AG04449 (cell line): ENCODE measurements at regions of chr19 and their contacts with region 1.

Region 1: GRCh38 chr19:46283771-46284170 is 13.1 kb upstream of the HIF3A start:
- DNase-seq: no peak
- H3K4me3 ChIP-seq: no peak overlapping the region
- CTCF ChIP-seq: no peak

Region 2: DNA sequence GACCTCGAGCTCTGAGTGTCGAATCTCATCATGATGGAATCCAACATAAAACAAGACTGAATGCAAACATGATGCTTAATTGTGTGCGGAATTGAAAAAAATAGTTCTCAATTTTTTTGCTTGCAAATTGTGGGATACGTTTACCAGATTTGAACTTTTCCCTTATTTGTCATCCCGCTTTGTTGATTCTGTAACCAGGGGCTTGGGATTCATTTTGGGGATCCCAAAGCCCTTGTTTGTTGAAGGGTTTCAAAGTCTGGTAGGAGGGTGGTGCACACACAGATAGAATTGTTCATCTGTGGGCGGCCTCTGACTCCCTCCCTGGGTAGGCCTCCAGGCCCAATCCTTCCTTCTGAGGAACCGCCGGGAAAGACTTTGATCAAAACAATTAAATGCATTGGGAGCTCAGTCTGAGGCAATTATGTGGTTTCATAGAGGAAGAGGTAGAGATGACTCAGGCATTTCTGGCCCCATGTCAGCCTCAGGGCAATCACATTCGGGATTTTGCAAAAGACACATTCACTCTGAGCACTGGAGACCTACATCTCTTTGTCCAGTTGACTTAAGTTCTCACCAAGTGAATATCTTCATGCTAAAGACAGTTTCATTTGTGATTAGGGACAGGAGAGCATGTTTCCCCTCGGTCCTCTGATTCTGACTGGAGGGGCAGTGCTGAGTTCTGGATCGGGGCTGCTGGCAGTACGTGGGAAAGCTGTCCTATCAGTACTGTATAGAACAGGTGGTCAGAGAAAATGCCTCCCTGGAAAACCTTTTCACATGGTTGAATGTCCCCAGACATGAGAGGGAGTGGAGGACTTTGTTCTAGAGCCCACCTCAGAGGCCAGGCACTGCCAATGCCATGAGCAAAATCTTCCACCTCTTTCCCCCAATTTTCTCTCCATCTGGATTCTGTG is 215.2 kb before region 1 on chr19:
- CTCF ChIA-PET with region 1: no interaction called
- POLR2A ChIA-PET with region 1: no interaction called
- DNase-seq: peak; percentile 52
- H3K4me3 ChIP-seq: no peak overlapping the region
- CTCF ChIP-seq: no peak

Region 3: DNA sequence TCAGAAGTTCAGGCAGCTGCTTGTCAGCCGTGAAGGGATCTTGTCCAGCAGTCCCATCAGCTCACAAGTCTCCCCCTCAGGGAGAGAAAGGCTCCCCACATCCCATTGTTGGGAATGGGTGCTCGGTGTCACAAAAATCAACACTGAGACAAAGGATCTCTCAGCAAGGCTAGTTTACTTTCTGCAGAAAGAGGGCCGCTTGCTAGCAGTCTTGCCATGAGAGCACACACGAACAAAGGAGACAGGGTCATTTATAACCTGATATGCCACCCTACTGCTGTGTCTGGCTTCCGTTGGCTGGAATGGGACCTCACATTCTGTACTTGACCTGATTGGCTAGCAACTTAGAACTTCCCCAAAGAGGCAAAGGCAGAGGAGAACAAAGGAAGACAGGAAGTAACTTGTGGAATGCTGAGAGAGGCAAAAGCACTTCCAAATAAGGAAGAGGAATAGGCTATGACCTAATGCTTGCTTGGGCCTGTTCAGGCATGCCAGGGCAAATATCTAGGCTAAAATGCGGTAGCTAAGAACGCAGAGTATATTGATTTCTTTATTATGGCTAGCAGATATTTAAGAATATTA is 150.6 kb before region 1 on chr19:
- CTCF ChIA-PET with region 1: no interaction called
- POLR2A ChIA-PET with region 1: no interaction called
- DNase-seq: peak; percentile 97
- H3K4me3 ChIP-seq: peak overlapping the region; percentile 19
- CTCF ChIP-seq: no peak

Region 4: DNA sequence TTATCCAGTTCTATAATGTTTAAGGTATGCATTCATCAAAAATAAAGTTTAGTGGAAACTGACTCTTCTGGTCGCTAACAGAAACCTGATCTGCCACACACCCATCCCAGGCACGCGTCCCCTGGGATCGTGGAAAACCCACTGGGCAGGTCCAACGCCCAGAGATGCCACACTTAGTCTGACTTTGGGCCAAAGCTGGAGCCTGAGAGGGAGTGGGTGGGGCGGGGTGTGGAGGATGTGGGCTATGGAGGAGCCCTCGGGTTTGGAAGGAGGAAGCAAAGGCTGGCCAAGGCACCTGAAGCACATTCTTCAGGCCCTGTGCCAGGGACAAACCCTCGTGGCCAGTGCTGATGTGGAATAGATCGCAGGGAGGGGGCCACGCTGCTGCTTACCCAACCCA is 51.7 kb before region 1 on chr19:
- CTCF ChIA-PET with region 1: no interaction called
- POLR2A ChIA-PET with region 1: no interaction called
- DNase-seq: no peak
- H3K4me3 ChIP-seq: no peak overlapping the region
- CTCF ChIP-seq: no peak

Region 5: GRCh38 chr19:46271481-46272197 is 12.1 kb before region 1 on chr19:
- CTCF ChIA-PET with region 1: interaction called, 16 read pairs
- POLR2A ChIA-PET with region 1: no interaction called
- DNase-seq: peak; percentile 55
- H3K4me3 ChIP-seq: no peak overlapping the region
- CTCF ChIP-seq: no peak

Region 6: DNA sequence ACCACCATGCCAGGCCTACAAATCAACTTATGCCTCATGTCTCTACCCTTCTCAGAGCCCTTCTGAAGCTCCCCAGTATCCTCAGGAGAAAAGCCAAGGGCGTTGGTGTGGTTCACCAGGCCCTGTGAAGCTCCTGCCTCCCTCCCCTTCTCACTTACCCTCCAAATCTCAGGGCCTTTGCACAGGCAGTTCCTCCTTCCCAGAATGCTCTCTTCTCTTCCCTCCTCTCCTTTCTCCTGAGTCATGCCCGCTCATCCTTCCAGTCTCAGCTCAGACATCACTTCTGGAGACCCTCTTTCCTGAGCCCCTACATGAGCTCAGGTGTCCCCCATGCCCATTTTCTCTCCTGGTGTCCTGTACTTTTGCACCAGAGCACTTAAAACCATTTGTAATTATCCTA is 33.6 kb after region 1 on chr19:
- CTCF ChIA-PET with region 1: interaction called, 12 read pairs
- POLR2A ChIA-PET with region 1: no interaction called
- DNase-seq: no peak
- H3K4me3 ChIP-seq: no peak overlapping the region
- CTCF ChIP-seq: no peak

Region 7: GRCh38 chr19:46355234-46356148 is 71.7 kb after region 1 on chr19:
- CTCF ChIA-PET with region 1: interaction called, 10 read pairs
- POLR2A ChIA-PET with region 1: no interaction called
- DNase-seq: no peak
- H3K4me3 ChIP-seq: no peak overlapping the region
- CTCF ChIP-seq: no peak

Region 8: GRCh38 chr19:46404055-46404752 is 120.4 kb after region 1 on chr19:
- CTCF ChIA-PET with region 1: interaction called, 53 read pairs
- POLR2A ChIA-PET with region 1: interaction called, 8 read pairs
- DNase-seq: no peak
- H3K4me3 ChIP-seq: peak overlapping the region; percentile 43
- CTCF ChIP-seq: peak; percentile 54

Region 9: DNA sequence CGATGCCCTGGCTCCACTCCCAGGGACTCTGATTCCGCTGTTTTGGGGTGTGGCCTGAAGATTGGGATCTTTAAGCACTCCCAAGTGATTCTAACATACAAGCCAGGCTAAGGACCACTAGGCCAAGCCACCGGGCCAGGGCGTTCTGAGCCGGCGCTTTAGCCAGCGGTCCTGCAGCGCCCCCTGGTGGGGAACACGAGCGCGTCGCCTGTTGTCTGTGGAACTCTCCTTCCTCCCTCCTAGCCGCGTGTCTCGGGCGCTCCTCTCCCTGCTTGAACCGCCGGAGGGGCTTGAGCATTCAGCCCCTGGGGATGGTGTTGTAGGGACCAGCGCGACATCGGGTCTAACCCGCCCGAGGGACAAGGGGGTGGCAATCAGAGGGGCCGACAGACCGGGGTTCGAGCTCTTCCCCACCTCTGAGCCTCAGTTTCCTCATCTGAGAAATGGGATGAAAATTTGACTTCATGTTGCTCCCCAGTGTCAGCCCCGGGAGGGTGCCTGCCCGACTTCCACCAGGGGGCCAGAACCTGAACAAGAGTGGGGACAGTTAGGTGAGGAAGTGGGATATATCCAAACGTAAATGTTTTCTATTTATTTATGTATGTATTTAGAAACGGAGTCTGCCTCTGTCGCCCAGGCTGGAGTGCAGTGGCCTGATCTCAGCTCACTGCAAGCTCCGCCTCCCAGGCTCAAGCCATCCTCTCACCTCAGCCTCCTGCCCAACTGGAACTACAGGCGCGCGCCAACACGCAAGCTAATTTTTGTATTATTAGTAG is 229.9 kb after region 1 on chr19:
- CTCF ChIA-PET with region 1: interaction called, 23 read pairs
- POLR2A ChIA-PET with region 1: no interaction called
- DNase-seq: no peak
- H3K4me3 ChIP-seq: no peak overlapping the region
- CTCF ChIP-seq: peak; percentile 76